ENCODE measurements at regions of chr22 and their contacts with region 1.

Region 1: GRCh38 chr22:37019309-37020125 is at the starts of genes MPST and TST:
- DNase-seq: peak in 10 of 14 experiments; percentile 15 to 70 (median 36)
- ATAC-seq: peak; percentile 81
- H3K4me3 ChIP-seq: peak within 1 kb of the TSS; percentile 64
- H3K4me3 Mint-ChIP-seq: peak within 1 kb of the TSS; percentile 88
- H3K27ac ChIP-seq: no peak within 1 kb of the TSS
- H3K27ac Mint-ChIP-seq: no peak within 1 kb of the TSS
- H3K4me1 ChIP-seq: peaks cover 29% of the 10 kb centered on the region
- H3K4me1 Mint-ChIP-seq: peaks cover 11% of the 10 kb centered on the region
- H3K27me3 ChIP-seq: peaks cover 0 to 4% of the 10 kb centered on the region in 2 experiments
- H3K27me3 Mint-ChIP-seq: peaks cover 13% of the 10 kb centered on the region
- CTCF ChIP-seq: no peak
- total RNA-seq, gene MPST: 1.7 to 1.8 TPM
- total RNA-seq, gene TST: not detected

Region 2: GRCh38 chr22:36901411-36902142 is 117.9 kb before region 1 on chr22:
- CTCF ChIA-PET with region 1: no interaction called
- POLR2A ChIA-PET with region 1: no interaction called
- intact Hi-C with region 1: no loop called
- DNase-seq: peak in 3 of 14 experiments; percentile 17 to 41 (median 31)
- ATAC-seq: no peak
- H3K4me3 ChIP-seq: no peak overlapping the region
- H3K4me3 Mint-ChIP-seq: no peak overlapping the region
- H3K27ac ChIP-seq: no peak overlapping the region
- H3K27ac Mint-ChIP-seq: no peak overlapping the region
- H3K4me1 ChIP-seq: peaks cover 15% of the 10 kb centered on the region
- H3K4me1 Mint-ChIP-seq: peaks cover 6% of the 10 kb centered on the region
- H3K27me3 ChIP-seq: peaks cover 5 to 15% of the 10 kb centered on the region in 2 experiments
- H3K27me3 Mint-ChIP-seq: peaks cover 58% of the 10 kb centered on the region
- CTCF ChIP-seq: no peak

Region 3: GRCh38 chr22:36946421-36947158 is 72.9 kb before region 1 on chr22:
- CTCF ChIA-PET with region 1: no interaction called
- POLR2A ChIA-PET with region 1: no interaction called
- intact Hi-C with region 1: loop called in 1 of 2 experiments (anchors 10 kb)
- DNase-seq: no peak
- ATAC-seq: no peak
- H3K4me3 ChIP-seq: no peak overlapping the region
- H3K4me3 Mint-ChIP-seq: no peak overlapping the region
- H3K27ac ChIP-seq: no peak overlapping the region
- H3K27ac Mint-ChIP-seq: no peak overlapping the region
- H3K4me1 ChIP-seq: no peaks in the 10 kb centered on the region
- H3K4me1 Mint-ChIP-seq: no peaks in the 10 kb centered on the region
- H3K27me3 ChIP-seq: no peaks in the 10 kb centered on the region
- H3K27me3 Mint-ChIP-seq: peaks cover 9% of the 10 kb centered on the region
- CTCF ChIP-seq: no peak

Region 4: DNA sequence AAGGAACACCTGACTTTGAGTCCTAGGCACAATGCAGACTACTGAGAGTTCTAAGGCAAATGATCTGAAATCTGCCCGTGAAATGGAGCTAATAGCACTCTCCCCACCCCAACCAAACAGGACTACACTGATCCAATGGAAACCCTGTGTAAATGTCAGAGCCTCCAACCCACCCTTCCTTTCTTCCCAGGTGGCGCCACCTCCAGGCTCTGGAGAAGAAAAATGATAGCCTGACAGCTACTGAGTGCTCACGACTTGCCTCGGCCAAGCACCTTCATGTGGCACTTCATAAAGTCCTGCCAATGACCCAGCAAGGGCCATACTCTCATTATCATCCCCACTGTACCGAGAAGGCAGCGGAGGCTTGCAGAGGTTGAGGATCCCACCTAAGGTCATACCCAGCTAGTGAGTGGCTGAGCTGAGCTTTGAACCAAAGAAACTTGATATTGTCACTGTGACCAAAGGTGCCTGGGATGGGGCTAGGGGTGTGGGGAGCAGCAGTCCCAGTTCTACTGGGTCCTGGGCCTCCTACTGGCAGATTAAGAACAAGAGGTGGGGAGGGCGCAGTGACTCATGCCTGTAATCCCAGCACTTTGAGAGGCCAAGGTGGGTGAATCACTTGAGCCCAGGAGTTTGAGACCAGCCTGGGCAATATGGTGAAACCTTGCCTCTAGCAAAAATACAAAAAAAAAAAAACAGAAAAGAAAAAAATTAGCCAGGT is 20.7 kb before region 1 on chr22:
- CTCF ChIA-PET with region 1: no interaction called
- POLR2A ChIA-PET with region 1: no interaction called
- intact Hi-C with region 1: no loop called
- DNase-seq: no peak
- ATAC-seq: no peak
- H3K4me3 ChIP-seq: no peak overlapping the region
- H3K4me3 Mint-ChIP-seq: no peak overlapping the region
- H3K27ac ChIP-seq: no peak overlapping the region
- H3K27ac Mint-ChIP-seq: no peak overlapping the region
- H3K4me1 ChIP-seq: no peaks in the 10 kb centered on the region
- H3K4me1 Mint-ChIP-seq: no peaks in the 10 kb centered on the region
- H3K27me3 ChIP-seq: no peaks in the 10 kb centered on the region
- H3K27me3 Mint-ChIP-seq: peaks cover 11% of the 10 kb centered on the region
- CTCF ChIP-seq: no peak